Stomach (tissue), 19 donors: ENCODE measurements at regions of chr2 and their contacts with region 1.

Region 1: GRCh38 chr2:19349911-19350677 is 8.3 kb downstream of the OSR1 start:
- DNase-seq: peak in 1 of 2 donors; percentile 73
- H3K4me3 ChIP-seq: peak overlapping the region in 2 of 4 donors; percentile 16 to 25
- H3K27ac ChIP-seq: peak overlapping the region in 2 of 5 donors; percentile 23 to 97
- H3K4me1 ChIP-seq: peaks cover 6 to 50% (median 28%) of the 10 kb centered on the region in 4 donors
- H3K27me3 ChIP-seq: peaks cover 0 to 60% (median 41%) of the 10 kb centered on the region in 3 donors
- CTCF ChIP-seq: peak in 5 of 7 experiments; percentile 20 to 66 (median 31)
- EP300 ChIP-seq: no peak
- POLR2A ChIP-seq: no peak

Region 2: DNA sequence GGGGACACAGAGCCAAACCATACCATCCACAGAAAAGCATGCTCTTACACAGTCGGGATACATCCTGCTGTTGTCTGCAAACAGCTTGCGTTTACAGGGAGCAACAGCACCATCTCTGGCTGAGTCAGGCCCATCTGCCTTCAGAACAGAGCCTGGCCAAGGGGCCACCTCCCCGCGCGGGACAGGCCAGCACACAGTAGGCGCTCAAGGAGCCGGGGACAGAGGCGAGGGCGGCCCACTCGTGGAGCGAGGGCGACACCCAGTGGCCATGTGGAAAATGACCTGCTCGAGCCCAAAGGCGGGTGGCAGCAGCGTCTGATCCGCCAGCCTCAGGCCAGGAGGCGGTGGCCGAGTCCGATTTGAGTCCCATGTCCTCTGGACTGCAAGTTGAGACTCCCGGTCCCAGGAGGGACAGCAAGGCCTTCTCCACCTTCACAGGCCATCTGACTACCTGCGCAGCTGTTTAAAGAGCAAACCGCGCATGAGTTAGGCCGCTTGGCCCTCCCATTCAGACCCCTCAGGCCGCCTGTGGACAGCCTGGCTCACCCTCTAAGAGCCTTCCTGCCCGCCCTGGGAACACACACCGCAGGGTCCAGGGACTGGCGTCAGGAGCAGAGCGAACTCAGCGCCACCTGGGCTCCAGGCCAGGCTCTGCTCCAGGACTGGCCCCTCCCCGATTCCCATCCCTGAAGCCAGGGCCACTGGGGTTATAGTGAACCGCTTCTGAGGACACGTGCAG is 513.4 kb after region 1 on chr2:
- intact Hi-C with region 1: loop called (anchors 10 kb)
- DNase-seq: peak; percentile 74 to 83
- H3K4me3 ChIP-seq: peak overlapping the region in 3 of 4 donors; percentile 5 to 25 (median 17)
- H3K27ac ChIP-seq: no peak overlapping the region
- H3K4me1 ChIP-seq: peaks cover 0 to 17% (median 11%) of the 10 kb centered on the region in 4 donors
- H3K27me3 ChIP-seq: peaks cover 0 to under 1% (median 0%) of the 10 kb centered on the region in 3 donors
- CTCF ChIP-seq: peak in 5 of 7 experiments; percentile 86 to 98 (median 94)
- EP300 ChIP-seq: no peak
- POLR2A ChIP-seq: no peak